ENCODE measurements at regions of chr12 and their contacts with region 1.

Region 1: DNA sequence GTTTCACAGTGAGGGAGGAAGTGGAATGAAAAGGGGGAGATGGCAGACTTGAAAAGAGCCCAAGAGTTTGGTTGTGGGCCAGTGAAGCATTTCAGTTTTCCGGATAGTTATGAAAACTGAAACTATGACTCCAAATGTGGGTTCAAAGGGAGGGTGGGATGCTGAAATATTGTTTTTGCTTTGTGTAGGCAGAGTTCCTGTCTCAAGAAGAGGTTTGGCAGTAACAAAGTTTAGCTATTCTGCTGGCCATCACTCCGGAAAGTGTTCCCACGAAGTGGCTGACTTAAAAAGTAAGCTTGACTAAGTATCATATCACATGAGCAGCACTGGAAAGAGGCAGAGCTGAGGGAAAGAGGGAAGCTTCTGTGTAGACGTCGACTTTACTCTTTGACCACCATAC is 85.2 kb downstream of the CAND1 start:
- DNase-seq: no peak
- ATAC-seq: no peak
- H3K4me3 ChIP-seq: no peak overlapping the region
- H3K27ac ChIP-seq: no peak overlapping the region
- H3K4me1 ChIP-seq: peaks cover 15% of the 10 kb centered on the region
- H3K27me3 ChIP-seq: no peaks in the 10 kb centered on the region
- CTCF ChIP-seq: no peak
- POLR2A ChIP-seq: no peak

Region 2: GRCh38 chr12:67410667-67411067 is 56.3 kb after region 1 on chr12:
- intact Hi-C with region 1: no loop called
- DNase-seq: peak; percentile 32 to 68 (median 53)
- ATAC-seq: peak; percentile 92
- H3K4me3 ChIP-seq: no peak overlapping the region
- H3K27ac ChIP-seq: peak overlapping the region; percentile 22 to 74 (median 50)
- H3K4me1 ChIP-seq: peaks cover 22% of the 10 kb centered on the region
- H3K27me3 ChIP-seq: no peaks in the 10 kb centered on the region
- CTCF ChIP-seq: peak in 3 of 7 experiments; percentile 4 to 20 (median 14)
- POLR2A ChIP-seq: no peak

Region 3: DNA sequence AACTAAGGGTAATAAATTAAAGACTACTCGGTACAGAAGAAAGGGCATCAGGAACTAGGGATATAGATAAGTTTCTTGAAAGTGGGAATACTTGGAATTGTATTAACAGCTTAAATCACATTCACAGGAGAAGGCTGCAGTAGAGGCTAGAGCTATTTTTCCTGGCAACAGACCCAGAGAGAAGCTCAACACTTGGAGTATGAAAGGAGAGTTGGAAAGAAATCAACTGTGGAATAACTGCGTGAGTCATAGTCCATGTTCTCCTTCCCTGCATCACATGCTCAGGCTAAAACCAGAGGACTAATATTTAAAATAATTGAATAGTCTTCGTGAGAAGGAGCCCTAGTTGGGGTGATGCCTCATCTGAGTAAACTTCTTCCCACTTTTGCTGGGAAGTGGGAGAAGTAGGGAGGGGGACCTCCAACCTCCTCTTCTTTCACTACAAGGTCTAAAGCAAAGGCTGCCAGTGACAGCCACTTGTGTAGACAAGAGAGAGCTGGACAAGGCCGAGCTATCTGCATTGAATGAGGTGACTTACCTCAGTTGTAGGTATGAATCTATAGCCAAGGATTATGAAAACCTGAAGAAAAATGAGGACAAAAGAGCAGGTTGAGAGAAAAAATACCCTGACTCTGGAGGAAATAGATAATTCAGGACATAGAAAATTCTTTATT is 326.9 kb after region 1 on chr12:
- intact Hi-C with region 1: no loop called
- DNase-seq: peak in 2 of 4 donors; percentile 27 to 54
- ATAC-seq: peak; percentile 72
- H3K4me3 ChIP-seq: no peak overlapping the region
- H3K27ac ChIP-seq: no peak overlapping the region
- H3K4me1 ChIP-seq: peaks cover 8% of the 10 kb centered on the region
- H3K27me3 ChIP-seq: no peaks in the 10 kb centered on the region
- CTCF ChIP-seq: no peak
- POLR2A ChIP-seq: no peak

Region 4: DNA sequence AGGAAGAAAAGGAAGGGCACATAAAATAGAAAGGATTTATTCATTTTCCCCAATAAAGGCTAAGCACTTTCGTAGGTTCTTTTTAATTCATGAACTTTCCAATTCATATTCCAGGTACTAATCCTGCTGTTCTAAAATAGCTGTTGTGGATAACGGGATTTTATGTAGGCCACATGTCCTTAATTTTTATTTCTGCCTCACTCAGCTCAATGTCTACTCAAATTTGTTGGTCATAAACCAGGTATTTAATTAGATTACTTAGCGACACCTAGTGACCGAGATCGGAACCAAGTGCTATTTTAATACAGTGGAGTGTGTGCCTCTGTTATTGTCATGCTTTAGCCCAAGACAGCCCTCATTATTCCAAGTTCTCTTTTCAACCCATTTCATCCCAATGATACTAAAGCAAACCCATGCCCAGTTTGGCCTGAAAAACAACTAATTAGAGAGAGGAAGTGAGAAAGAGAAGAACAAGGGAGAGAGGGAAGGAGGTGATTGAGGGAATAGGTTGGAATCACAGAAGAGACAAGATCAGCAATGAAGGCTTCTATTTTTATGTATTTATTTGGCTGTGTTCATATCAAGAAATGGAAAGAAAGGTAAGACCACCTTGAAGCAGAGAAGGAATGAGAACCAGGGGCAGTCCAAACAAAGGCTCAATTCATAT is 589.0 kb after region 1 on chr12:
- intact Hi-C with region 1: loop called (anchors 5 kb)
- DNase-seq: peak; percentile 77 to 88 (median 82)
- ATAC-seq: peak; percentile 93
- H3K4me3 ChIP-seq: no peak overlapping the region
- H3K27ac ChIP-seq: no peak overlapping the region
- H3K4me1 ChIP-seq: peaks cover 12% of the 10 kb centered on the region
- H3K27me3 ChIP-seq: no peaks in the 10 kb centered on the region
- CTCF ChIP-seq: peak; percentile 29 to 89 (median 85)
- POLR2A ChIP-seq: no peak